ENCODE measurements at regions of chr14 and their contacts with region 1.

Region 1: DNA sequence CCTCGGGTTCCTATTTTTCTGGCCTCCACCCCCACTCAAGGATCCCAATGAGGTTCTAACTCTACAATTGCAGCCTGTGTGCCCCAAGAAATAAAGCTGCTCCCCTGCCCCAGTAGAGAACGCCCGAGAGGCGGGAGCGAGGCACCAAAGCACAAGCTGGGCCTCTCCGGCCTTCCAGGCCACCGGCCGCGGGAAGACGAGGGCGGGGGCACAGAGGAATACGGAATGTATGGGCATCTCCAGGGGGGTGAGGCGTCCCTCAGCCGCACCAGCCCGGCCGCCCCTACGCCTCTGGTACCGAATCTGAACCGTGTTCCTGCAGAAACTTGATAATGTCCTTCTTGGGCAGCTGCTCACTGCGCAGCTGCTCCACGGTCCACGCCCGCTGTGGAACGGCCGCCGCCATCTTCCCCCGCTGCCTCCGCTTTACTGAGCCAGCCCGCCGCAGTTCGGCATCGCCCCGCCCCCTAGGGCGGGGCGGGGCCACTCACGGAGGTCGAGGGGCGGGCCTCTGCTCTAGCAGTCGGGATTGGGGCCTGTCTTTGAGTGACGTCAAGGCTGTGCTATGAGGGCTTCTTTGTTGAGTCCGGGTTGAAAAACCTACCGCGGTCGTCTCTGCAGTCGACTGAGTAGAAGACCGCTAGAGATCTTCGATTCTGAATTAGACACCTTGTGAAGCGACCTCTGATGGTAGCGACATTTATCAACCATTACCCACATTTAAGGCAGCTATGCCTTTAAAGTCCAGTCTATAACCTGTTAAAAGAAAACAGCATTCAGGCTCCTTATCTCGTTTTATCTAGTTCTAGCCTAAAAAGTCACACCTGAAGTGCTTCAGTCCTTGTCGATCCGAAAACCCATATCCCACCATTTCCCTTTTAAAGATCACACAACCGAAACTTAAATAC is at the start of gene FKBP3:
- DNase-seq: peak; percentile 90 to 99 (median 94)
- ATAC-seq: peak; percentile 90
- H3K4me3 ChIP-seq: peak within 1 kb of the TSS; percentile 82
- H3K4me3 Mint-ChIP-seq: peak within 1 kb of the TSS; percentile 99
- H3K27ac ChIP-seq: peak within 1 kb of the TSS; percentile 84 to 89
- H3K27ac Mint-ChIP-seq: peak within 1 kb of the TSS; percentile 99
- H3K4me1 ChIP-seq: peaks cover 14% of the 10 kb centered on the region
- H3K4me1 Mint-ChIP-seq: peaks cover 70% of the 10 kb centered on the region
- H3K27me3 ChIP-seq: no peaks in the 10 kb centered on the region
- H3K27me3 Mint-ChIP-seq: no peaks in the 10 kb centered on the region
- CTCF ChIP-seq: peak; percentile 22
- total RNA-seq, gene FKBP3: 36.0 to 40.2 TPM

Region 2: DNA sequence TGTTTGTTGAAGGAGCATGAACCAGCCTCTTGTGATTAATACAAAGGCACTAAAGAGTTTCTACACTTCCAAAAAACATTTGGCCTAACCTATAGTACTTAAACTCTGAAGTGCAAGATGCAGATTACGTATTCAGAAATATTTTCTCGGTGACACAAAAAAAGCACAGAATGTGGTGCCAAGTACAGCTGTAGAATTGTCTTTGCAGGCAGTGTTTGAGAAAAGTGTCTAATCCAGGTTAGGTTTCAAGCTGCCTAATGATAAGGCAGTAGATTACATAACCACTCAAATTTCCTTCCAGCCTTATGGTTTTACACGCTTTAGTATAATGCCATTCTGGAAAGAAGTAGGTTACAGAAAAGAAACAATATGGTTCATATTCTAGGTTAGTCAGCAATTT is 377.8 kb before region 1 on chr14:
- CTCF ChIA-PET with region 1: no interaction called
- POLR2A ChIA-PET with region 1: no interaction called
- intact Hi-C with region 1: no loop called
- DNase-seq: no peak
- ATAC-seq: no peak
- H3K4me3 ChIP-seq: no peak overlapping the region
- H3K4me3 Mint-ChIP-seq: no peak overlapping the region
- H3K27ac ChIP-seq: no peak overlapping the region
- H3K27ac Mint-ChIP-seq: no peak overlapping the region
- H3K4me1 ChIP-seq: no peaks in the 10 kb centered on the region
- H3K4me1 Mint-ChIP-seq: no peaks in the 10 kb centered on the region
- H3K27me3 ChIP-seq: no peaks in the 10 kb centered on the region
- H3K27me3 Mint-ChIP-seq: no peaks in the 10 kb centered on the region
- CTCF ChIP-seq: no peak

Region 3: DNA sequence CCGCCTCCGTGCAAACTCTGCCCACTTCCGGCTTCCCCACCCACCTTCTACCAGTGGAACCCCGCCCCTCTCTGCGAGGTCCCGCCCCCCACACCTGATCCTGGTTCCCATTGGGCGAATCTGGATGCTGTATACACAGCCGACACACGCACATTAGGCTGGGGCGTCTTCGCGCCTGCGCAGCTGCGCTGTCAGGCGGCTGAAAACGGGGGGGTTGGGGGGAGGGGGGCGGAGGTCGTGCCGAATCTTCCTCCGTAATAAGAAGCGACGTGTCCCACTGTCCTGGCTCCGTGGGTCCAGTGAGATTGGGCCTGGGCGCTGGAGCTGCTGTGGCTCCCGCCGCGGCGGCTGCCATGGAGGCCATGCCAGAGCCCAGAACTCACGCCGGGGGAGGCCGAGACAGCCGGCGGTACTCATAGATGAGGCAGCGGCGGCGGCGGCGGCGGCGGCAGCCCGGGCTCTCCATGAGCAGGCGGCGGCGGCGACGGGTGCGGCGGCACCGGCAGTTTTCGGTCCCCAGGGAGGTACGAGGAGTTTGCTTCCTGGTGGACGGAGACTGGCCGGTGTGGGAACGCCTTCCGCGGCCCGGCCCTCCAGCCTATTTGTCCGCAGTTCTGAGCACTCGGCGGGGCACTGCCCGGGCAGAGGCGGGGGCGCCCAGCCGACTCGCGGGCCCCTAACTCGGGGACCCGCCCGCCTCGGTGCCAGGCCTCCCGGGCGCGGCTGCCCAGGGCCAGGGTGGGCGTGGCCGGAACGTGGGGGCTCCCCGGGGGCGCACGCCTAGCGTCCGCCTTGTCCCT is 237.1 kb before region 1 on chr14:
- CTCF ChIA-PET with region 1: no interaction called
- POLR2A ChIA-PET with region 1: interaction called, 31 read pairs
- intact Hi-C with region 1: loop called (anchors 1 to 5 kb)
- DNase-seq: peak; percentile 95 to 99 (median 98)
- ATAC-seq: peak; percentile 97
- H3K4me3 ChIP-seq: peak overlapping the region; percentile 69
- H3K4me3 Mint-ChIP-seq: peak overlapping the region; percentile 95
- H3K27ac ChIP-seq: peak overlapping the region; percentile 85
- H3K27ac Mint-ChIP-seq: peak overlapping the region; percentile 96
- H3K4me1 ChIP-seq: peaks cover 10% of the 10 kb centered on the region
- H3K4me1 Mint-ChIP-seq: peaks cover 39% of the 10 kb centered on the region
- H3K27me3 ChIP-seq: no peaks in the 10 kb centered on the region
- H3K27me3 Mint-ChIP-seq: no peaks in the 10 kb centered on the region
- CTCF ChIP-seq: no peak

Region 4: GRCh38 chr14:45083971-45084722 is 50.2 kb before region 1 on chr14 and contains the start of gene PRPF39:
- CTCF ChIA-PET with region 1: no interaction called
- POLR2A ChIA-PET with region 1: interaction called, 23 read pairs
- intact Hi-C with region 1: loop called (anchors 1 to 2 kb)
- DNase-seq: peak; percentile 88 to 98 (median 94)
- ATAC-seq: peak; percentile 91
- H3K4me3 ChIP-seq: peak within 1 kb of the TSS; percentile 78
- H3K4me3 Mint-ChIP-seq: peak within 1 kb of the TSS; percentile 98
- H3K27ac ChIP-seq: peak within 1 kb of the TSS; percentile 47 to 79
- H3K27ac Mint-ChIP-seq: peak within 1 kb of the TSS; percentile 89
- H3K4me1 ChIP-seq: peaks cover 25% of the 10 kb centered on the region
- H3K4me1 Mint-ChIP-seq: peaks cover 58% of the 10 kb centered on the region
- H3K27me3 ChIP-seq: no peaks in the 10 kb centered on the region
- H3K27me3 Mint-ChIP-seq: no peaks in the 10 kb centered on the region
- CTCF ChIP-seq: no peak
- total RNA-seq, gene PRPF39: 58.9 to 64.3 TPM

Region 5: DNA sequence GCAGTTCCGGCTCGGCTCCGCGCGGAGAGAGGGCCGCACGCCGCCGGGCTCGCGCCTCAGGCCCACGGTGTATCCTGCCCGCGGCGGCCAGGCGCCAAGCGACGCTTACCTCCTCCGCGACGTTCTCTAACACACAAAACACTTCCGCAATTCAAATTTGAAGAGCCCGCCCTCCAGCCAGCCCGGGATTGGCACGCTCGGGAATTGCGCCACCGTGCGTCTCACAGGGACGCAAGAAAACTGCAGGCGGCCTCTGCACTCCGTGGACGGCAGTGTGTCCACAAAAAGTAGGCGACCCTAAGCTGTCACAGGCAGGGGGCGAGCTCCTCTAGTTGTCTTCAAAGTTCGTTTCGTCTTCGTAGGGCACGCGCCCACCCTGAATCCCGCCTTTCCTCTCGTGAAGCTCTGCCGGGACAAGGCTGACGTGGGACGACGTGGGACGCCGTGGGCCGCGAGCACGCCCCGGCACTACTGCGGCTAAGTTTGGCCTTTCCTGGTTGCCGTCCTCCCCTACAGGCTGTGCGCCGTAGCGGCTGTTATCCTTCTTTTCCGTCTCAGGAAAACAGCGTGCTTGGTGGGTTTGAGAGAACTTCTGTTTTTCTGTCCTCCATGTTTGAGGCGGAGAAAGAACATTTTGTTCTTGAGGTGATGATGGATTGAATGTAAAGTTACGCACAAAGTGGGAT is 118.9 kb after region 1 on chr14 and contains the start of gene MIS18BP1:
- CTCF ChIA-PET with region 1: interaction called, 12 read pairs
- POLR2A ChIA-PET with region 1: interaction called, 9 read pairs
- intact Hi-C with region 1: loop called (anchors 1 to 2 kb)
- DNase-seq: peak; percentile 86 to 97 (median 92)
- ATAC-seq: peak; percentile 91
- H3K4me3 ChIP-seq: peak within 1 kb of the TSS; percentile 75
- H3K4me3 Mint-ChIP-seq: peak within 1 kb of the TSS; percentile 95
- H3K27ac ChIP-seq: peak within 1 kb of the TSS; percentile 69 to 84
- H3K27ac Mint-ChIP-seq: peak within 1 kb of the TSS; percentile 95
- H3K4me1 ChIP-seq: peaks cover 28% of the 10 kb centered on the region
- H3K4me1 Mint-ChIP-seq: peaks cover 28% of the 10 kb centered on the region
- H3K27me3 ChIP-seq: no peaks in the 10 kb centered on the region
- H3K27me3 Mint-ChIP-seq: no peaks in the 10 kb centered on the region
- CTCF ChIP-seq: peak; percentile 82
- total RNA-seq, gene MIS18BP1: 20.1 to 20.3 TPM

Region 6: GRCh38 chr14:45267071-45267470 is 132.8 kb after region 1 on chr14:
- CTCF ChIA-PET with region 1: no interaction called
- POLR2A ChIA-PET with region 1: no interaction called
- intact Hi-C with region 1: loop called in 1 of 2 experiments (anchors 5 kb)
- DNase-seq: no peak
- ATAC-seq: no peak
- H3K4me3 ChIP-seq: no peak overlapping the region
- H3K4me3 Mint-ChIP-seq: no peak overlapping the region
- H3K27ac ChIP-seq: no peak overlapping the region
- H3K27ac Mint-ChIP-seq: no peak overlapping the region
- H3K4me1 ChIP-seq: no peaks in the 10 kb centered on the region
- H3K4me1 Mint-ChIP-seq: no peaks in the 10 kb centered on the region
- H3K27me3 ChIP-seq: no peaks in the 10 kb centered on the region
- H3K27me3 Mint-ChIP-seq: peaks cover 5% of the 10 kb centered on the region
- CTCF ChIP-seq: no peak